Breast epithelium (tissue), 4 donors: ENCODE measurements at regions of chr14 and their contacts with region 1.

Region 1: GRCh38 chr14:100629696-100630095 is 42.5 kb upstream of the BEGAIN start:
- DNase-seq: no peak
- H3K4me3 ChIP-seq: no peak overlapping the region
- H3K27ac ChIP-seq: no peak overlapping the region
- H3K4me1 ChIP-seq: no peaks in the 10 kb centered on the region
- H3K27me3 ChIP-seq: peaks cover 0 to 10% of the 10 kb centered on the region in 2 donors
- CTCF ChIP-seq: no peak
- POLR2A ChIP-seq: no peak

Region 2: GRCh38 chr14:101903111-101903561 is 1273.4 kb after region 1 on chr14:
- intact Hi-C with region 1: loop called (anchors 5 kb)
- DNase-seq: no peak
- H3K4me3 ChIP-seq: no peak overlapping the region
- H3K27ac ChIP-seq: no peak overlapping the region
- H3K4me1 ChIP-seq: no peaks in the 10 kb centered on the region
- H3K27me3 ChIP-seq: no peaks in the 10 kb centered on the region
- CTCF ChIP-seq: no peak
- POLR2A ChIP-seq: no peak

Region 3: GRCh38 chr14:102292441-102292840 is 1662.7 kb after region 1 on chr14:
- intact Hi-C with region 1: no loop called
- DNase-seq: no peak
- H3K4me3 ChIP-seq: no peak overlapping the region
- H3K27ac ChIP-seq: no peak overlapping the region
- H3K4me1 ChIP-seq: no peaks in the 10 kb centered on the region
- H3K27me3 ChIP-seq: no peaks in the 10 kb centered on the region
- CTCF ChIP-seq: no peak
- POLR2A ChIP-seq: no peak